Left colon (tissue), 2 donors: ENCODE measurements at regions of chr16 and their contacts with region 1.

Region 1: DNA sequence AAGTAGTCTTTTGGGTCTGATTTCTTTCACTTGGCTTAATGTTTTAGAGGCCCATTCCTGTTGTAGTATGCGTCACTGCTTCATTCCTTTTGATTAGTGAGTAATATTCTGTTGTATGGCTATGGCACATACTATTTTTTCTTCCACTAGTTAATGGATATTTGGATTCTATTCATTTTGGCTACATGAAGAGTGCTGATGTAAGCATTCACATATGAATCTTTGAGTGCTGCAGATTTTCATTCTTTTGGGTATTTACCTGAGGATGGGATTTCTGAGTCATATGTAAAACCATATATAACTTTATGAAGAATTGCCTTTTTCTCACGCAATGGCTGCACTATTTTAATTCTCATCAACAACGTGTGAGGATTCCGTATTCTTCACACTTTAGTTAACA is 113.6 kb downstream of the AHSP start:
- DNase-seq: no peak
- ATAC-seq: no peak

Region 2: GRCh38 chr16:31327646-31328242 is 313.5 kb before region 1 on chr16:
- intact Hi-C with region 1: loop called in 1 of 2 experiments (anchors 10 kb)
- DNase-seq: no peak
- ATAC-seq: no peak

Region 3: DNA sequence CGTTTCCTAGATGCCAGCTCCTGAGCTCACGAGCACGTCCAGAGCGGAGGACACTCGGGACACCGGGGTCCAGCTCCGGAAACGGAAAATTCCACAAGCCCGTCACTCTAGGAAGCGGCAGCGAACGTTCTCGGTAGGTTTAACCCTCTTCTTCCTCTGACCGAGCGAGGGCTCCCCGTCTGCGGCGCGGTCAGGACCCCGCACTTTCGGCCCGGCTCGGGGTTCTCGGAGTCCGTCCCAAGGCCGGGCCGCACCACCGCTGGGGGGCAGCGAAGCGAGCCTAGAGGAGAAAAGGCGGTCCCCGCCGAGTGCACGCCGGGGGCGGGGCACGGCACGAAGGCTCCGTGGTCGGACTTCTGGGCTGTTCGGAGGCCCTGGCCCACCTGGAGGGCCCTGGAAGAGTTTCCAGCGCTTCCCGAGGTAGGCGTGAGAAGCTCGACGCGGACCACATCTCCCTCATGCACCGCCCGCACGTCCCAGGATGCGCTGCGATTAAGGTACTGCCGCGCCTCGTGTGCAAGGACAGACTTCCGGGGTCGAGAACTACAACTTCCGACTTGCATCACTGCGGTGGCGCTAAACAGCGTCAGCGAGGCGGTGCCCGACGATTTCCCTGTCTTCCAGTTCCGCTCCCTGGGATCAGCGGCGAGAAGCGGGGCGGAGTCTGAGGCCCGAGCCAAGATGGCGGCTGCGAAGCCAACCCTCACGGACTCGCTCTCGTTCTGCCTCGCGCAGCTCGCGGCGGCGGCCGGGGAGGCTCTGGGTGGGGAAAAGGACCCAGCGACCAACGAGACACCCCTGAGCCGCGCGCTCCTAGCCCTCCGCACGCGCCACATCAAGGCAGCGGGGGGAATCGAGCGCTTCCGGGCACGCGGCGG is 182.2 kb before region 1 on chr16 and contains the start of gene ARMC5:
- intact Hi-C with region 1: no loop called
- DNase-seq: peak; percentile 97 to 99
- ATAC-seq: peak; percentile 80
- total RNA-seq, gene ARMC5: 7.0 to 8.5 TPM

Region 4: DNA sequence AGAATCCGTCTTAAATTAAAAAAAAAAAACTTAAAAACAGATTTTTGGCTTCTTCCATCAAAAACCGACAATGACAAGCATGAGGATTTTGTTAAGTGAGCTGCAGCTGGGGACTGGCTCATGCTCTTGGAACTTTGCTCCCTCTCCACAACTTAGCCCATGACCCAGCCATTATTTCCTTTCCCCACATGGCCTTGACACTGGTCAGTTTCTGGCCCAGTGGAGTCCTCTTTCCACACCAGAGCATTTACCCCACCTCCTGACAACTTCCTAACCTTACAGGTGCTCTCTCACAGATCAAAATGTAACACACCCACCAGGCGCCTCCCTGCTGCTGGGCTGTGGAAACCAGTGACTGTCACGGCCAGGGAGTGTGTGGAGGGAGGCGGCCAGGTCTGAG is 169.6 kb after region 1 on chr16:
- intact Hi-C with region 1: no loop called
- DNase-seq: no peak
- ATAC-seq: no peak